PC-9 (cell line): ENCODE measurements at regions of chr10 and their contacts with region 1.

Region 1: DNA sequence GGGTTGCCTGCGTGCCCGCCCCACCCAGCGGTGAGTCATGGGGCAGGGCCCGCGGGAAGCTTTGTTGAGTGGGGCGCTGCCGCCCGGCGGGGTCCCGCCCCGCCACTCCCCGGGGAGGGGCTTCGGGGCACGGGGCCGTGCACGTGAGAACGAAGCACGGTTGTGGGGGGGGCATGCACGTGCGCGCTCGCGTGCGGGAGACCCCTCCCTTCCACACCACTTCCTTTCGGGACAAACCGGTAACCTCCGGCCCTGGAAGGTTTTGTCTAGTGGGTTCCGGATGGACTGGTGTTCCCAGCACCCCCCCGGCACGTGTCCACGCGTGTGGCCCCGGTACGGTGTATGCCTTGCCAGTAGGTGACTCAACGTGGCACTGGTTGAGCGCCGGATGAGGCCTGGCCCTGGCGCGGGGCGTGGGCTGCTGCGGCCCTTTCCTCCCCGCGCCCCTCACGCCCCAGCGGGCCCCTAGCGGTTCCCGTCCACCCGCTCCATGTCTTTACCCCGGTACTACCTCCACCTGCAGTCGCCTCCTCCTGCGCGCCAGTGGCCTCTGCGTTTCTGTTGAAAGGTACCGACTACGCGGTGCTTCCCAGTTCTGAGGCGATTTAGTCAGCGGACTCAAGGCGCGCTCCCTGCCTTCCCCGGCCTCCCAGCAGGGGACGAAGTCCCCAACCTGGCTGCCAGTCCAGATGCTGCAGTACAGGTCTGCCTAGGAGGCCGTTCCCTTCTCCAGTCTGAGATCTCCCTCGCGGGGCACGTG is 3.1 kb downstream of the ADIRF start:
- DNase-seq: peak; percentile 66 to 88
- H3K4me3 ChIP-seq: peak overlapping the region; percentile 81
- H3K27ac ChIP-seq: peak overlapping the region; percentile 91
- H3K4me1 ChIP-seq: peaks cover 63% of the 10 kb centered on the region
- H3K27me3 ChIP-seq: no peaks in the 10 kb centered on the region
- CTCF ChIP-seq: no peak

Region 2: GRCh38 chr10:86936661-86937501 is 34.5 kb before region 1 on chr10:
- CTCF ChIA-PET with region 1: interaction called, 18 read pairs
- POLR2A ChIA-PET with region 1: interaction called, 16 read pairs
- intact Hi-C with region 1: no loop called
- DNase-seq: no peak
- H3K4me3 ChIP-seq: no peak overlapping the region
- H3K27ac ChIP-seq: no peak overlapping the region
- H3K4me1 ChIP-seq: peaks cover 11% of the 10 kb centered on the region
- H3K27me3 ChIP-seq: no peaks in the 10 kb centered on the region
- CTCF ChIP-seq: no peak

Region 3: DNA sequence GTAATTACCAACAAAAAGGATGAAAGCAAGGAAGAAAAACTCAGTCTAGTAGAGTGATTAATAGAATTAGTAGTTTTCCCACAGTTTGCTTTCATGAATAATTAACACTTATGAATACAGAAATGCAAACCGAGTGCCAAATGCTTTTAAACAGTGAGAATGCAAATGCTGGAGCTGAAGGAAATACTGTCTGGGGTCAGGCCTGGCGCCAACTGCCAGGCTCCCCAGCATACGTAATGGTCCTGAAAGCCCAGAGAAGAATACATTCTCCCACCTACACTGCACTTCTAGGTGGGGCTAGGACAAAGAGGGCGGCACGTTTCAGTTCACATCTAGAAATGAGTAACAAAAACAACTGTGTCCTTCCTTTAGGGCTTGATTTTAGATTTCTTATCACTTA is 93.2 kb after region 1 on chr10:
- CTCF ChIA-PET with region 1: interaction called, 14 read pairs
- POLR2A ChIA-PET with region 1: interaction called, 6 read pairs
- intact Hi-C with region 1: no loop called
- DNase-seq: no peak
- H3K4me3 ChIP-seq: no peak overlapping the region
- H3K27ac ChIP-seq: no peak overlapping the region
- H3K4me1 ChIP-seq: no peaks in the 10 kb centered on the region
- H3K27me3 ChIP-seq: no peaks in the 10 kb centered on the region
- CTCF ChIP-seq: no peak

Region 4: GRCh38 chr10:87094373-87095235 is 123.2 kb after region 1 on chr10 and contains the starts of genes GLUD1 and SHLD2:
- CTCF ChIA-PET with region 1: no interaction called
- POLR2A ChIA-PET with region 1: interaction called, 9 read pairs
- intact Hi-C with region 1: loop called (anchors 2 kb)
- DNase-seq: peak; percentile 66 to 88
- H3K4me3 ChIP-seq: peak within 1 kb of the TSS; percentile 83
- H3K27ac ChIP-seq: peak within 1 kb of the TSS; percentile 80
- H3K4me1 ChIP-seq: peaks cover 38% of the 10 kb centered on the region
- H3K27me3 ChIP-seq: no peaks in the 10 kb centered on the region
- CTCF ChIP-seq: no peak
- total RNA-seq, gene GLUD1: 93.0 and 105 TPM in 2 replicates
- total RNA-seq, gene SHLD2: 11.3 and 15.9 TPM in 2 replicates